Caki2 (cell line): ENCODE measurements at regions of chr3 and their contacts with region 1.

Region 1: GRCh38 chr3:94071713-94072284 is 8.9 kb downstream of the NSUN3 start:
- DNase-seq: no peak

Region 2: DNA sequence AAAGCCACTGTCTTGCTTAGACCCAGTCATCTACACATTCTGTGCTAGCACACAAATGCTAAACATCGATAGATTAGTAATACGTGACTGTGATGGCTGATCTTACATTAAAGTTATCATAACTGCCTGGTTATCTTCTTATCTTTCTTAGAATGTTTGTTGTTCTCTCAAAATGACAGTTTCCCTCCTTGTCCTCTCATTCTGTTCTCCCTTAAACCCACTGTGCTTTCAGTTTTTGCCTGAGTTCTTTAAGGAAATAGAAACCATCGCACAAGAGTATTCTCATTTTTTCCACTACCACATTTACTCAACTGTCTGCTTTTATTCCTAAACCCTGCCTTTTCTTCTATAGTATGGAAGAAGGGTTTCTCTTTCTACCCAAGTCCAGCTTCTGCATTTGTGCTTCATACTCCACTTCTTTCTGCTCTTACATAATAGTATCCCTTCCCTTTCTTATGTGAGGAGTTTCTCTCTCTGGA is 60.5 kb before region 1 on chr3:
- in situ Hi-C with region 1: loop called (anchors 10 kb)
- DNase-seq: no peak